ENCODE measurements at regions of chr18 and their contacts with region 1.

Region 1: DNA sequence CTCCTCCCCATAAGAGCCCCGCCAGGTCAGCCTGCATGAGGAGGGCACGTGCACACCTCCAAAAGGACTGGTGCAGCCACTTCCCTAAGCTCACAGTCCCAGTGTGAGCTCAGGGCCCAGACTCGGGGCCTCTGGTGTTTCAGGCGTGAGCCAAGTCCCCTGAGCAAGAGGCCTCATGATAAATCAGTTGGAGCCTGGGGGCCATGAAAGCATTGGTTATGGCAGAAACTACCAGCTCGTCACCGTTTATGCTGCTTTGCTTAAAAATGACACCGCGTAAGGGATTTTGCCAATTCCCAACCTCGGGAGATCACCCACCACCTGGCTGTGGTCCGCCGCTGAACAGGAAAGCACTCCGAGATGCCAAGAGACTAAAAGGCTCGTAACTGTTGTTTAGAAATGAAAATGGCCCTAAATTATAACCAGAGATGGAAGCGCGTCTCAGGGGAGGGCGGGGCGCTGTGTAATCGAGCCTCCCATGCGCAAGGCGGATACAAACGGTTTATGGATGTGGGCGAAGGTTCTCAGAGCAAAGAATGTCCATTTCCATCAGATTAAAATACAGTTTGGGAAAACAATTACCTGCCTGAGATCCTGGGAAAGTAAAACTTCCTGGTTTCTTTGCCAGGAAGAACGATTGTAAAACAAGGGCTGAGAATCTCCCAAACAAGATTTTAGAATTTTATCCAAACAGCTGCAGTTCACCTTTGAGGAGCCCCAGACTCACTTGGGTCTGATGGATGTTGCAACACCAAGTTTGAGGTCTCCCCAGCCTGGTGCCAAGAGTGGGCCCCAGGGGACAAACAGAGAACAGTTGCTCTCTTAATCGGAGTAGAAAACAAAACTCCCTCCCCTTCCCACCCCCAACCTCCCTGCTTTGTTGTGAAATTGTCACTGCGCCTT is 141.4 kb downstream of the BCL2 start:
- DNase-seq: peak in 2 of 3 donors; percentile 52 to 57
- H3K4me3 ChIP-seq: no peak overlapping the region
- H3K27ac ChIP-seq: no peak overlapping the region
- H3K4me1 ChIP-seq: peaks cover 4 to 23% (median 13%) of the 10 kb centered on the region in 4 experiments
- H3K27me3 ChIP-seq: no peaks in the 10 kb centered on the region

Region 2: DNA sequence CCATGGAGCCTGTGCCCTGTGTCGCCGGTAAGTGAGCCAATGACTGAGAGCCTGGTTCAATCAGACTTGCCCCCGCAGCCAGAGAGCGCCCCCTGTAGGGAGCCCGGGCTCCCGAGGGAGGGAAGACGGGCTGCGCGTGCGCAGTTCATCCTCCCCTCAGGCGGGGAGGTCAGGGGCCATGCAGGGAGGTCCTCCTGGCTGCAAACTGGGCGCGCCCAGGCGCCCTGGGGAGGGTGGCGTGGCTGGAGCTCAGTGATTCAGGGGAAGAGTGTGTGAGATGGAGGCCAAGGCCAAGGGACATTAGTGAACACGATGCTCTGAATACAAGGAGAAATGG is 186.2 kb before region 1 on chr18:
- CTCF ChIA-PET with region 1: no interaction called
- POLR2A ChIA-PET with region 1: no interaction called
- DNase-seq: no peak
- H3K4me3 ChIP-seq: no peak overlapping the region
- H3K27ac ChIP-seq: no peak overlapping the region
- H3K4me1 ChIP-seq: no peaks in the 10 kb centered on the region
- H3K27me3 ChIP-seq: no peaks in the 10 kb centered on the region

Region 3: DNA sequence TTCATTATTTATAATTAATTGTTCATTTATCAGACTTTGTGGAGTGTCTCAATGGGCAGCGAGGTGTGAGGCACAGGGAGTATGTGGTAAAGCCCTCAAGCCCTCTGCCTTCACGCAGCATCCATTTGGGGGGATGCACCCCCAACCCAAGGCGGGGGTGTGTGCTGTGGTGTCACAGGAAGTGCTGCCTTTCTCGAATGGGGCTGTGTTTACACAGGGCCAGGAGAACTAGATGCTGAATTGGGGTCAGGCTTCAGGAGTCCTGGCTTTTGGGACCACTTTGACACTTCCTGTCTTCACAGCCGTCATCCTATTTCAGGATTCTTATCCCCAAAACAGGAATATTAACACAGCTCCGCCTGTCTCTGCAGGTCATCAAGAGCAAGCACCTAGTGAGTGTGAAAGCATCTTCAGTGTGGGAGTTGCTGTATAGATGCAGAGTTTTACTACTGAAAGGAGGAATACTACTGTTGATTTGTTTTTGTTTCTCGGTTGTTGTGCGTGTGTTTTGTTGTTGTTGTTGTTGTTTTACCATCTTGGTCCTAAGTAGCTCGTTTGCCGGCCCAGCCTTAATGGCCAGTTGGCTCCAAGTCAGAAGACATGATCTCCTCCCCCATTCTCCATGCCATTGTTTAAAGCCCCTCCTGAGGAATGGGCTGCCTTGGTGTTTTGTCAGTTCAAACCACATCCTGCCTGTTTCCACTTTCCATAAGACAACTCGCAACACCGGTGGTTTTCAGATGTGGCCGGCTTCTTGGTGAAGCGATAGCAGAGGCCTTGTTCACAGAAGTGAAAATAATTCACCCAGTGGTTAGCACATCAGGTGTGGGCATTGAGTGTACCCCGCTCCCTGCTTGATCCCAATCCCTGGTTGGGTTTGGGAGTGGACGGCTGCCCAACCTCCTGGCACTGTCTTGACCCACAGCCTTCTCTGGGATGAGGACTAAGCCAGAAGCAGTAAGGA is 79.9 kb before region 1 on chr18:
- CTCF ChIA-PET with region 1: no interaction called
- POLR2A ChIA-PET with region 1: no interaction called
- DNase-seq: peak; percentile 57 to 94 (median 91)
- H3K4me3 ChIP-seq: peak overlapping the region in 4 of 7 experiments; percentile 9 to 50 (median 30)
- H3K27ac ChIP-seq: peak overlapping the region; percentile 10 to 72
- H3K4me1 ChIP-seq: peaks cover 20 to 59% (median 52%) of the 10 kb centered on the region in 4 experiments
- H3K27me3 ChIP-seq: no peaks in the 10 kb centered on the region

Region 4: DNA sequence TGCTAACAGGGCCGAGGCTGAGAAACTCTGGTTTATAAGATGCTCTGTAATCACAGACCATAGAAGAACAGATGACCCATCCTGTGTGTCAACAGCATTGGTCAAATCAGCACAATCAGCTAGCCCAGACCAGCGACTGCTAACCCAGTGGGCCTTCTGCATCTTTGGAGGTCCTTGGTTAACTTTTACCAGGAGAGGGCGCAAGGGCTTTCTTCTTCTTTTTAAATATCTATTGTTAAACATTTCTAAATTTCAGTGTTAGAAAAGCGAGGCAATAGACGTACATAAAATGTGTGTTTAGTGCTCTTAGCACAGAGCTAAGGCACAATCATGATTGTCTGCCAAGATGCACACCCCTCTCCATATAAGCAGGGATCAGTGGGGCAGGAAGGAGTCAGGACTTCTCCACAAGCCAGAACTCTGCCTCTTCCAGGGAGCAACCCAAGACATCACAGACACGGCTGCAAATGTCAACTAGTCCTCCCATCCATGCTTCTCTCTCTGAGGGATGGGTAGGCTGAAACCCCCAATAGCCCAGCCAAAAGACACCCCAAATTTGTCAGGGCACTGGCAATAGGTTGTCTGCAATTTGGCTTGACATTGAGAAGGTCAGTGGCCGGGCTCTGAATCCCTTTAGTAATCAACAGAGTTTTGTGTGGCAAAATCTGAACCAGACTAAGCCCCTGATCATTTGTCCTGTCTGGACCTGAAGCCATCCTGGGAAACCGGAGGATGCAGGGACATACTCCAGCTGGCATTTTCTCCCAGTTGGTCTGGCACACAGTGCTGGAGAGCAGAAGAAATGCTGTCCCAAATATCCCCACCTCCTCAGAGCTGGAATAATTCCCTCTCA is 46.8 kb before region 1 on chr18:
- CTCF ChIA-PET with region 1: no interaction called
- POLR2A ChIA-PET with region 1: no interaction called
- DNase-seq: peak; percentile 63 to 76 (median 70)
- H3K4me3 ChIP-seq: no peak overlapping the region
- H3K27ac ChIP-seq: no peak overlapping the region
- H3K4me1 ChIP-seq: peaks cover 0 to 24% (median 13%) of the 10 kb centered on the region in 4 experiments
- H3K27me3 ChIP-seq: no peaks in the 10 kb centered on the region

Region 5: GRCh38 chr18:63161761-63162195 is 16.4 kb before region 1 on chr18:
- CTCF ChIA-PET with region 1: interaction called, 12 read pairs
- POLR2A ChIA-PET with region 1: interaction called, 3 read pairs
- DNase-seq: peak; percentile 22 to 66 (median 58)
- H3K4me3 ChIP-seq: no peak overlapping the region
- H3K27ac ChIP-seq: no peak overlapping the region
- H3K4me1 ChIP-seq: peaks cover 0 to 13% (median 0%) of the 10 kb centered on the region in 4 experiments
- H3K27me3 ChIP-seq: no peaks in the 10 kb centered on the region

Region 6: DNA sequence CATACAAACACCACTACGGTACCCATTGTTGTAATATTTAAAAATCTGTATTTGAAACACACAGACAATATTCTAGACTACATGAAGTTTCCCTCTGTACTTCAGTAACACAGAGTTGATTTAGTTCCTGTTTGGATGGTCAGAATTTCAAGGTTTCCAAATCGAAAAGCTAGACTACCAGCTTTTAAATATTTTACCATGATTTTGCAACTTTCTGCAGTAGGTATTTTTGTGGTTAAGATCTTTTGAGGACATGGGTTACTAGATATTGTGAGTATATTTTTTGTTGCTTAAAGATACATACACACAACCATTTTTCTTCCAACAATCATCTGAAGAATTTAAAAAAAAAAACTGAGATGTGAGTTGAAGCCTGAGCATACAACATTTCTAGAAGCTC is 309.5 kb after region 1 on chr18:
- CTCF ChIA-PET with region 1: no interaction called
- POLR2A ChIA-PET with region 1: no interaction called
- DNase-seq: peak in 2 of 3 donors; percentile 26 to 27
- H3K4me3 ChIP-seq: no peak overlapping the region
- H3K27ac ChIP-seq: no peak overlapping the region
- H3K4me1 ChIP-seq: peaks cover 0 to 9% (median 2%) of the 10 kb centered on the region in 4 experiments
- H3K27me3 ChIP-seq: no peaks in the 10 kb centered on the region